ENCODE measurements at regions of chr10 and their contacts with region 1.

Region 1: DNA sequence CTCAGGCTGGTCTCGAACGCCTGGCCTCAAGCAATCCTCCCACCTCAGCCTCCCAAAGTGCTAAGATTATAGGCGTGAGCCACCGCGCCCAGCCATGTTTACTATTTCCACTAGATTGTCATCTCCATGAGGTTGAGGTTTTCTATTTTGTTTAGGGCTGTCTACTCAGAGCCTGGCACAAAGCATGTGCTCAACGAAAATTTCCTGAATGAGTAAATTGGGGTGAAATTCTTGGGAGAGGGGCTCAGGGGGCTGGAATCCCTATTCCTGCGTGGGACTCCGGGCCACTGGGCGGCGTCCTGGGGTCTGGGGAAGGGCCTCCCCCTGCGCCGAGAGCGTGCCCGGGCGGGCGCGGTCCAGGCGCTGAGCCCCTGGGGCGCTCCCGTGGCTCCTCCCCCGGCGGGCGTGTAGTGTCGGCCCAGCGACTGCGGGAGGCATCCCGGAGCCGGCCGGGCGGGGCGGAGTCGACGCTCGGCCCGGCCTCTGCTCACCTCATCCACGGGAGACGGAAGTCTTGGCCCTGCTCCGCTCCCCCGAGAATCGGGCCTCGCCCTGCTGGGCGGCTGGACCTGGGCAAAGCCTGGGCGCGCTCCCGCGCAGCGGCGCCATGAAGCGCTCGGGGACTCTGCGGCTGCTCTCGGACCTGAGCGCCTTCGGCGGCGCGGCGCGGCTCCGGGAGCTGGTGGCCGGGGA is at the start of gene HPS6:
- DNase-seq: peak; percentile 92 to 96 (median 95)
- ATAC-seq: peak; percentile 92 to 99 (median 98)
- H3K4me3 ChIP-seq: peak within 1 kb of the TSS; percentile 79 to 99 (median 94)
- H3K27ac ChIP-seq: peak within 1 kb of the TSS; percentile 85 to 98 (median 92)
- H3K4me1 ChIP-seq: peaks cover 8 to 50% (median 33%) of the 10 kb centered on the region in 12 donors
- H3K27me3 ChIP-seq: no peaks in the 10 kb centered on the region
- CTCF ChIP-seq: peak in 8 of 12 donors; percentile 10 to 48 (median 30)
- POLR2A ChIP-seq: peak in 1 of 2 donors; percentile 87
- total RNA-seq, gene HPS6: 7.8 to 23.1 (median 12.4) TPM

Region 2: GRCh38 chr10:102114861-102115618 is 50.0 kb after region 1 on chr10:
- intact Hi-C with region 1: loop called in 7 of 10 experiments (anchors 5 kb)
- DNase-seq: peak; percentile 92 to 94 (median 93)
- ATAC-seq: peak; percentile 70 to 84 (median 81)
- H3K4me3 ChIP-seq: peak overlapping the region; percentile 54 to 90 (median 73)
- H3K27ac ChIP-seq: peak overlapping the region; percentile 75 to 99 (median 95)
- H3K4me1 ChIP-seq: peaks cover 4 to 72% (median 63%) of the 10 kb centered on the region in 12 donors
- H3K27me3 ChIP-seq: no peaks in the 10 kb centered on the region
- CTCF ChIP-seq: no peak
- POLR2A ChIP-seq: peak in 1 of 2 donors; percentile 54

Measured in heart left ventricle (tissue), 16 donors.